ENCODE measurements at regions of chr7 and their contacts with region 1.

Region 1: GRCh38 chr7:128890306-128891109 is 20.0 kb downstream of the KCP start:
- DNase-seq: peak; percentile 80 to 94
- H3K4me3 ChIP-seq: peak overlapping the region; percentile 95
- H3K27ac ChIP-seq: peak overlapping the region; percentile 94
- H3K4me1 ChIP-seq: peaks cover 62% of the 10 kb centered on the region
- H3K27me3 ChIP-seq: no peaks in the 10 kb centered on the region
- CTCF ChIP-seq: no peak

Region 2: GRCh38 chr7:128425850-128426249 is 464.7 kb before region 1 on chr7:
- CTCF ChIA-PET with region 1: no interaction called
- POLR2A ChIA-PET with region 1: no interaction called
- intact Hi-C with region 1: no loop called
- DNase-seq: peak in 1 of 2 experiments; percentile 80
- H3K4me3 ChIP-seq: no peak overlapping the region
- H3K27ac ChIP-seq: no peak overlapping the region
- H3K4me1 ChIP-seq: peaks cover 30% of the 10 kb centered on the region
- H3K27me3 ChIP-seq: no peaks in the 10 kb centered on the region
- CTCF ChIP-seq: peak; percentile 95

Region 3: DNA sequence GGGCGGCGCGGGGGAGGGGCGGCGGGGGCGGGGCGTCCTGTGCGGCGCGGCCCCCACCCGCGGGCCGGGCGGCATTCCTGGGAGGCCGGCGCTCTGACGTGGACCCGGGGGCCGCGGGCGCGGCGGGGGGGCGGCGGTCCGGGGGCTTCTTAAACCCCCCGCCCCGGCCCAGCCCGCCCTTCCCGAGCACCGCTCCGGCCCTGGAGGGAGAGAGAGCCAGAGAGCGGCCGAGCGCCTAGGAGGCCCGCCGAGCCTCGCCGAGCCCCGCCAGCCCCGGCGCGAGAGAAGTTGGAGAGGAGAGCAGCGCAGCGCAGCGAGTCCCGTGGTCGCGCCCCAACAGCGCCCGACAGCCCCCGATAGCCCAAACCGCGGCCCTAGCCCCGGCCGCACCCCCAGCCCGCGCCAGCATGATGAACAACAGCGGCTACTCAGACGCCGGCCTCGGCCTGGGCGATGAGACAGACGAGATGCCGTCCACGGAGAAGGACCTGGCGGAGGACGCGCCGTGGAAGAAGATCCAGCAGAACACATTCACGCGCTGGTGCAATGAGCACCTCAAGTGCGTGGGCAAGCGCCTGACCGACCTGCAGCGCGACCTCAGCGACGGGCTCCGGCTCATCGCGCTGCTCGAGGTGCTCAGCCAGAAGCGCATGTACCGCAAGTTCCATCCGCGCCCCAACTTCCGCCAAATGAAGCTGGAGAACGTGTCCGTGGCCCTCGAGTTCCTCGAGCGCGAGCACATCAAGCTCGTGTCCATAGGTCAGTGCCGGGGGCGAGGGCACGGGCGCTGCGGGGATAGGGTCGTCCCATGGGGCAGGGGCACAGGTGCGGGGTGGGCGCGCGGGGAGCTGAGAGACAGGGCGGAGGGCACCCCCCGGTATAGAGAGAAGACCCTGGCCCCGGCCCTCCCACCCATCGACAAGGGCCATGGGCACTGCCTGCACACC is 60.0 kb before region 1 on chr7 and contains the start of gene FLNC:
- CTCF ChIA-PET with region 1: interaction called, 3 read pairs
- POLR2A ChIA-PET with region 1: no interaction called
- intact Hi-C with region 1: loop called (anchors 5 kb)
- DNase-seq: peak in 1 of 2 experiments; percentile 60
- H3K4me3 ChIP-seq: peak within 1 kb of the TSS; percentile 54; the same call in 1 of the 2 replicates
- H3K27ac ChIP-seq: no peak within 1 kb of the TSS
- H3K4me1 ChIP-seq: peaks cover 52% of the 10 kb centered on the region
- H3K27me3 ChIP-seq: no peaks in the 10 kb centered on the region
- CTCF ChIP-seq: no peak
- total RNA-seq, gene FLNC: 75.5 and 96.6 TPM in 2 replicates

Region 4: DNA sequence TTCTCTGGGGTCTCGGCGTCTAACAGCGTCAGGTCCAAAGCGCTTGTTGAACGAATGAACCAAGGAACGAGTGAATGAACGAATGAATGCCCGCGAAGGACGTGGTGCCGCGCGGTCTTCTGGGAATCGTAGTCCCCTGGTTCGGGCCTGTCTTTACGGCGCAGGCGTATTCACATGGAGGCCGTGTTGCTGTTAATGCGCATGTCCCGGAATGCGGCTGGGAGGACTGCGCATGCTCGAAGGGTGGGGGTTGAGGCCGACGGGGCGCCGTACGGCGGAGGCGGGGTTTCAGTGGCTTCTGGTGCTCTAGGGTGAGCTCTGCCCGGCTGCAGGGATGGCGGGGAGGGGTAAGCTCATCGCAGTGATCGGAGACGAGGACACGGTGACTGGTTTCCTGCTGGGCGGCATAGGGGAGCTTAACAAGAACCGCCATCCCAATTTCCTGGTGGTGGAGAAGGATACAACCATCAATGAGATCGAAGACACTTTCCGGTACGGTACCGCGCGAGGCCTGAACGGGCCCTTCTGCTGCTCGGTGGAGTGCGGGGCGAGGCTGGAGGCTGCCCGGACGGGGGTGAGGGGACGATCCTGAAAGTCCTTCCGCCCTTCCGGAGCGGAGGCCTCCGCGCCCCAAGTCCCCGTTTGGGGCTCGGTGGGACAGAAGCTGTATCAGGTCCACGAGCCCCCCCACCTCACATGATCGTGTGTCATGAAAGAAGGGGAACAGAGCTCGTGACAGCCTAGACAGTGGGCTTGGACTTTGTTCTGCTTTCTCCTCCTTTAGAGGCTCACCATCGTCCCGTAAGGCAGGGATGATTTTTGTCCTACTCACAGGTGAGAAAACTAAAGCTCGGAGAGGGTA is 27.7 kb before region 1 on chr7 and contains the start of gene ATP6V1F:
- CTCF ChIA-PET with region 1: no interaction called
- POLR2A ChIA-PET with region 1: interaction called, 4 read pairs
- intact Hi-C with region 1: loop called (anchors 2 kb)
- DNase-seq: peak; percentile 88 to 99
- H3K4me3 ChIP-seq: peak within 1 kb of the TSS; percentile 71
- H3K27ac ChIP-seq: no peak within 1 kb of the TSS
- H3K4me1 ChIP-seq: peaks cover 10% of the 10 kb centered on the region
- H3K27me3 ChIP-seq: no peaks in the 10 kb centered on the region
- CTCF ChIP-seq: no peak
- total RNA-seq, gene ATP6V1F: 114 and 169 TPM in 2 replicates

Region 5: DNA sequence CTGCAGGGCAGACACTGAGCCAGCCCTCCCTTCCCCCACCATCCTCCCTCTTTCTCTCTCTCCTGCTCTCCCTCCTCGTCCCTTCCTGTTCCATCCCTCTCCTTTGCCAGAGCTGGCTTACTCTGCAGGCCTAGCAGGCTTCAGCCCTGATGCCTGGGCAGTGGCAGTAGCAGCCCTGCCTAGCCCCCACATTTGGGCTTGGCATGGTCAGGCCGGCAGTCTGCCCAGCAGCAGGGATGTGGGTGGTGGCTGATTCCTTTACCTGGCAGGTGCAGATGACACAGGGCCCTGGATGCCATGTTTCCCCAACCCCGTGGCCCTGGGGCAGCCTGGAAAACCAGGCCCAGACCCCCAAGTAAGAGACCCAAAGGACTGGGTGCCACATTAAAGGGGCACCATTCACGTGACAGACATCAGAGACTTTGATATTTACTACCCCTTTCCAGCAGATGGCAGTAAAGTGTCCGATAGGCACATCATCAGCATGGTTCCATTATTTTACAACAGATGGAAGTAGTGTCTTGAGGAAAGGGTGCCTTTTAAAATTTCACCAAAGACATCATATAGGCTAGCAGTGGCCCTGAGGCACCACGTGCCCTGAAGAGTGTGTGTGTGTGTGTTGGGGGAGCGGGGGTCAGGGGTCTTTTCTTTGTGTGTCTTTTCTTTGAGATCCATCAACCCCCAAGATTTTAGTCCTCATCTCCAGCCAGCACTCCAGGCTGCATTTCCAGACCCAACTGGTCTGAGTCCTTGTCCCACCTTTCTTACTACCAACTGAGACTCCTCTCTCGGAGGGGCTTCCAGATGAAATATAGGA is 14.1 kb after region 1 on chr7:
- CTCF ChIA-PET with region 1: no interaction called
- POLR2A ChIA-PET with region 1: interaction called, 8 read pairs
- intact Hi-C with region 1: loop called (anchors 1 kb)
- DNase-seq: no peak
- H3K4me3 ChIP-seq: no peak overlapping the region
- H3K27ac ChIP-seq: no peak overlapping the region
- H3K4me1 ChIP-seq: peaks cover 27% of the 10 kb centered on the region
- H3K27me3 ChIP-seq: no peaks in the 10 kb centered on the region
- CTCF ChIP-seq: peak; percentile 73